Activated naive CD4-positive, alpha-beta T cell treated with anti-CD3 and anti-CD28 coated beads for 36 hours (primary cell): ENCODE measurements at regions of chr2 and their contacts with region 1.

Region 1: GRCh38 chr2:127591221-127591923 is 54.6 kb upstream of the GPR17 start:
- DNase-seq: peak; percentile 78
- H3K4me3 Mint-ChIP-seq: no peak overlapping the region
- H3K27ac Mint-ChIP-seq: no peak overlapping the region
- H3K4me1 Mint-ChIP-seq: no peaks in the 10 kb centered on the region
- H3K27me3 Mint-ChIP-seq: no peaks in the 10 kb centered on the region

Region 2: DNA sequence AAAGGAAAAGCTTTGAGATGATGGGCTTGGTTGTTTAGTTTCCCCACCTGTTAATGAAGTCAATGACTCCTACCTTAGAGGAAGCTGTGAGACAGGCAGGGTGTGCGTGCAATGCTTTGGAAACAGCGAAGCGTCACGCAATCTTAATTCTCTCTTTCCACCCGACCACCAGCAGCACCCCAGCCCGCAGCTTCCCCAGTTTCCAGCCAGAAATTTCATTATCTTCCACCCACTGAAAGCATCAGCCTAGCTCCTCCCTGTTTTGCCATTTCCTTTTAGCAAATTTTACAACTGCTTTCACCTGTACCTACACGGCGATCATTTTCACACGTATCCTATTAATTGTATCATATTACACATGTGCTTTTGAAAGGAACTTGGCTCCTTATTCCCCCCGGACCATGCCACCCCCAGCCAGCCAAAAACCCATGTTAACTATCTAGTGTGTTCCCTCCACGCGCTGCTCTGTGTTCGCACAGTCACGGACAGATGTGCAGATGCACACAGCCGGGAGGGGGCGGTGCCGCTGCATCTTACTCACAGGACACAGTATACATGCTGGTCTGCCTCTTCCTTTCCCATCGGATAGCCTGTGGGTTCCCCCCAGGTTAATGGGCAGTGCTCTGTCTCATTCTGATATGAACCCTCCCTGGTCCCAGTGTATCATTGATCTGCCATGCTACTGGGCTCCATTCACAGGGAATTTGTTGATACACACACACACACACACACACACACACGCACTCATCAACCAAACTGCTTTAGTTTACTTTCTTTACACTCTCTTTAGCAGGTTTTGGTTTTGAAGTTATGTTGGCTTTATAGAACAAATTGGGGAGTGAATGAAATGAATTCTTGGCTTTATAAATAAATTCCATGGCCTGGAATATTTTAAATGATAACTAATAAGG is 393.6 kb before region 1 on chr2:
- CTCF ChIA-PET with region 1: interaction called, 5 read pairs
- intact Hi-C with region 1: loop called (anchors 1 kb)
- DNase-seq: peak; percentile 80
- H3K4me3 Mint-ChIP-seq: peak overlapping the region; percentile 69
- H3K27ac Mint-ChIP-seq: no peak overlapping the region
- H3K4me1 Mint-ChIP-seq: peaks cover 5% of the 10 kb centered on the region
- H3K27me3 Mint-ChIP-seq: no peaks in the 10 kb centered on the region

Region 3: DNA sequence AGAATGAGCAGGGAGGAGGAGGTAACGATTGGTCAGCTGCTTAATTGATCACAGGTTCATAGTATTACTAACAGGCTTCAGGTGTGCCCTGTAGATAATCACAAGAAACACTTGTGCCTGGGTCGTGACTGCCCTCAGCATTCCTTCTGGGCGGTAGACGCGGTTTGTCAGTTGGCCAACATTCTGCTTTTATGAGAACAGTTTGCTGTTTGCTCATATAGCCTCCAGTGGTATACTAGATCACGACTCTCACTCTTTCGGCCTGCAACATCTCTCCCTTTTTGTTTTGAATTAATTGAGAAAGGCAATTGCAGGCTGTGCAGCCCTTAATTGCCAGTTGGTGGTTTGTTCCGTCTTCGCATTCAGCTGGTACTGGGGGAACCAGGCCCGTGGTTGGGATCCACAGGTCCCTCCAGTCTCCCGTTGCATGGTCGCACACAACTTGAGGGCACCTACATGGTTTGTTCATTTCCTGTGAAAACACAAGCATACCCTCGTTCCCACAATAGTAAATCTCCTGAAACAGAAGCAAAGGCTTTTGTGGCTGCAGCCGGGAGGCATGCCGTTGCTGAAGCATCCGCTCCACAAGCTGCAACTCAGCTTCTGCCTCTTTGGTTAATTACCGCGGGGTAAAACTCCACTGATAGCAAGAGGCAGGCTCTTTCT is 24.3 kb after region 1 on chr2:
- CTCF ChIA-PET with region 1: interaction called, 14 read pairs
- intact Hi-C with region 1: no loop called
- DNase-seq: peak; percentile 11
- H3K4me3 Mint-ChIP-seq: no peak overlapping the region
- H3K27ac Mint-ChIP-seq: no peak overlapping the region
- H3K4me1 Mint-ChIP-seq: peaks cover 24% of the 10 kb centered on the region
- H3K27me3 Mint-ChIP-seq: no peaks in the 10 kb centered on the region

Region 4: DNA sequence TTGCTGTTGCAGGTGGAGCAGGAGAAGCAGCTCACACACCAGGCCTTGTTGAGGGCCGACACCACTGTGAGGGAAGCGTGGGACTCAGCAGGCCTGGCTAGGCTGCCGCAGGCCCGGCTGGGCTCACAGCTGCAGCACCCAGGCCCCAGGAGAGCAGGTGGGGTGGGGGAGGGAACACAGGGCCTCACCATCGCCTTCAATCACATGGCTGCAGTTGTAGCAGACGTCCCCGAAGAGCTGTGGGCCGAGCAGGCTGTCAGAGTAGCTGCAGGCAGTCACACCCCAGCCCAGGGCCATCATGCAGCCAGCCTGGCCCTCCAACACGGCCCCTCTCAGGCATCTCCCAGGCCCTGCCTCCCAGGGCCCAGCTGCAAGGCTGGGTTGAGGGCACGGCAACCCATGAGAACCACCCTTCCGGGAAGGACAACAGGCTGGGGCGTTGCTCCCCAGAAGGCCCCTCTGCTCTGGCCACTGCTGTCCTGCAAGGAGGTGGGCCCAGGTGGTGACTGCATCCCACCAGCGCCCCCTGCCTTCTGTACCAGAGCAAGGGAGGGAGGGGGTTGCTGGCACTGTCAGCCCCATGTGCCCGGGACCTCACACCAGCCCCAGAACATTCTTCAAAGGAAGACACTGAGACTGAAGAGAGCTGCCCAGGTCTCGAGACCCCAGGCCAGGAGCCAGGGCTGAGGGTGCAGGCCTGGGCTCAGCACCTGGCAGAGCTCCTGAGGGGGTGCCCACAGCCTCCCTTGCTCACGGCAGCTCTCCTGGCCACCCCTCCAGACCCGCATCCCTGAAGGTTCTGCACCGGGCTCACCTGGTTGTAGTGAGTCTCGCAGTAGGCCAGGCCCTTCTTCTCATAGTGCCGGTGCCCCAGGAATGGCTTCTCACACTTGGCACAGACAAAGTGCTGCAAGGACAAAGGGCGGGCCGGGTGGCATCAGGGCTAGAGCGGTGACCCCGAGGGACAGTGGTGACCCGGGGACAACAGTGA is 49.0 kb after region 1 on chr2:
- CTCF ChIA-PET with region 1: interaction called, 145 read pairs
- intact Hi-C with region 1: loop called (anchors 2 kb)
- DNase-seq: peak; percentile 65
- H3K4me3 Mint-ChIP-seq: peak overlapping the region; percentile 65
- H3K27ac Mint-ChIP-seq: peak overlapping the region; percentile 71
- H3K4me1 Mint-ChIP-seq: peaks cover 54% of the 10 kb centered on the region
- H3K27me3 Mint-ChIP-seq: no peaks in the 10 kb centered on the region

Region 5: GRCh38 chr2:127675331-127676261 is 84.2 kb after region 1 on chr2 and contains the start of gene LIMS2:
- CTCF ChIA-PET with region 1: interaction called, 11 read pairs
- intact Hi-C with region 1: no loop called
- DNase-seq: no peak
- H3K4me3 Mint-ChIP-seq: peak within 1 kb of the TSS; percentile 54
- H3K27ac Mint-ChIP-seq: no peak within 1 kb of the TSS
- H3K4me1 Mint-ChIP-seq: peaks cover 10% of the 10 kb centered on the region
- H3K27me3 Mint-ChIP-seq: peaks cover 43% of the 10 kb centered on the region
- total RNA-seq, gene LIMS2: 14.6 to 15.5 TPM

Region 6: DNA sequence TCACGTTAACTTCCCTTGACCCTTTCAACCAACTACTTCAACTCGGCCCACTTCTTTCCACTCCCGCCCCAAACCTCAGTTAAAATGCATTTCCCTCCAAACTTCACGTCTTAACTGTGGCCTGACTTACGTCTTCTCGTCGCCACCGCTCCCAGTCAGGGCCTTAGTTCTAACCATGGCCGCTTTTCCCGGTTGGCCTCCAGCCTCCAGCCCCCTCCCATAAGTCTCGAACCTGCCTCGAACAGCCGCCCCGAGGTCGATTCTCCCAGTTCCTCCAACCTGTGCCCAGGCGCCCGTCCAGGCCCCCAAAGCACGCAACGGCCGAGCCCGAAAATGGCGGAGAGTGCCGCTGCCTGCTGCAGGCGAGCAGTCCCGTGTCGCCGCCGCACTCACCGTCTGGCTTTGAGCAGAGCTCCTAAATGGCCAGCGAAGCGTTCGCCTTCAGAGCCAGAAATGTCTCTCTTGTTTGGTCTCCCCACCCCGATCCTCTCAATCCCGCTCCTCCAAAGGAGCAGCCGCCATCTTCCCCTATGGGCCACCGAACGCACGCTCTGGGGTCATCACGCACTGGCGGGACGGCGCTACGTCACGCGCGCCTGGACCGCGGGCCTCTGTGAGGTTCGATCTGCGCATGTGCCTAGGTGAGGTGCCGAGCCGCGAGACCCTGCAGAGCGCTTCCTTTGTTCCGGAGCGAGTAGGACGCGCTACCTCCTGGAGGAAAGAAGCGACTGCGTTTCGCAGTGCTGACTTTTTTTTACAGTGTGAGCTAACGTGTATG is 219.4 kb after region 1 on chr2 and contains the start of gene WDR33:
- CTCF ChIA-PET with region 1: interaction called, 7 read pairs
- intact Hi-C with region 1: loop called (anchors 1 kb)
- DNase-seq: peak; percentile 97
- H3K4me3 Mint-ChIP-seq: peak within 1 kb of the TSS; percentile 94
- H3K27ac Mint-ChIP-seq: peak within 1 kb of the TSS; percentile 97
- H3K4me1 Mint-ChIP-seq: peaks cover 41% of the 10 kb centered on the region
- H3K27me3 Mint-ChIP-seq: no peaks in the 10 kb centered on the region
- total RNA-seq, gene WDR33: 61.1 to 63.2 TPM